ENCODE measurements at regions of chr18 and their contacts with region 1.

Region 1: GRCh38 chr18:9771261-9771976 is 63.3 kb downstream of the RAB31 start:
- DNase-seq: peak; percentile 56 to 97 (median 91)

Region 2: GRCh38 chr18:9708057-9708433 is 63.4 kb before region 1 on chr18 and contains the start of gene RAB31:
- intact Hi-C with region 1: loop called (anchors 10 kb)
- DNase-seq: peak; percentile 9 to 90 (median 76)

Region 3: GRCh38 chr18:9814431-9814830 is 43.0 kb after region 1 on chr18:
- intact Hi-C with region 1: no loop called
- DNase-seq: no peak

Measured in head of caudate nucleus (tissue), 42 donors.